HAP-1 (cell line): ENCODE measurements at regions of chr4 and their contacts with region 1.

Region 1: GRCh38 chr4:183074296-183074990 is 24.6 kb upstream of the WWC2 start:
- DNase-seq: no peak
- H3K4me3 ChIP-seq: no peak overlapping the region
- H3K4me1 ChIP-seq: peaks cover 22% of the 10 kb centered on the region
- H3K27me3 ChIP-seq: no peaks in the 10 kb centered on the region

Region 2: DNA sequence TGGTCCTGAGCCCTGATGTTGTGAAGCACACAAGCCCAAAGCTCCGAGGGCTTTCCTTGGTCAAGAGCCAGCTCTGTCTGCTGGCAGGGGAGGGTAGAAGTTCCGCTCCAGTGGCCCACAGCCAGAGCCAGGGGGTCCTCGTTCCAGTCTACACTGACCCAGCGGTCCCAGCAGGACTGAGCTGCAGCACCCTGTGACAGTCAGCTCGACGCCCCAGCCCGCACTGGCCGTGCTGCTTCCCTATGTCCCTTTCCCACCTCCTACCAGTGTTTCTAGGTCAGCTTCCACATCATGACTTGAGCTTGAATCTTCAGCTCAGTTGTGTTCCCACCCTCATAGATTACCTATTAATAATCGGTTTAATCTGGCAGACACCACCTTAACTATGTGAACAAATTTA is 134.8 kb before region 1 on chr4:
- in situ Hi-C with region 1: loop called (anchors 10 kb)
- DNase-seq: no peak
- H3K4me3 ChIP-seq: no peak overlapping the region
- H3K4me1 ChIP-seq: 0 out of 2 replicates have a peak, but pooled peaks cover 3% of the 10 kb centered on the region
- H3K27me3 ChIP-seq: no peaks in the 10 kb centered on the region

Region 3: DNA sequence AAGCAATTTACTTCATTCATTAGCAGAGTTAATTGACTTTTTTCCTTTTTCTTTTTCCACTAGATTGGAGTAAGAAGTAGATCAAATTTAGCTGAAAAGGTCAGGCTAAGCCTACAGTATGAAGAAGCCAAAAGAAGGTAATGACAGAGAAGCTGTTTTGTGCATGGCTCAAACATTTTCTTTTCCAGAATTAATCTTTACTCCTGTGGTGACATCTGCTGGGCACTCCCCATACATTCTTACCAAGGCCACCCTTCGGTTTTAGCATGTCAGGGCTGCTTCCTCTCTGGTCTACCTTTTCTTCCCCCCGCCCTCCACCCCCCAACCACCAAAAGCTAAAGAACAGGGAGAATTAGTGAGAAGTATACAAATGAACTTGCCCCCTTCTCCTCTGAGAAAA is 175.4 kb after region 1 on chr4:
- in situ Hi-C with region 1: loop called (anchors 5 kb)
- DNase-seq: peak; percentile 24 to 36
- H3K4me3 ChIP-seq: no peak overlapping the region
- H3K4me1 ChIP-seq: peaks cover 8% of the 10 kb centered on the region
- H3K27me3 ChIP-seq: no peaks in the 10 kb centered on the region